GM12878 (cell line): ENCODE measurements at regions of chr1 and their contacts with region 1.

Region 1: DNA sequence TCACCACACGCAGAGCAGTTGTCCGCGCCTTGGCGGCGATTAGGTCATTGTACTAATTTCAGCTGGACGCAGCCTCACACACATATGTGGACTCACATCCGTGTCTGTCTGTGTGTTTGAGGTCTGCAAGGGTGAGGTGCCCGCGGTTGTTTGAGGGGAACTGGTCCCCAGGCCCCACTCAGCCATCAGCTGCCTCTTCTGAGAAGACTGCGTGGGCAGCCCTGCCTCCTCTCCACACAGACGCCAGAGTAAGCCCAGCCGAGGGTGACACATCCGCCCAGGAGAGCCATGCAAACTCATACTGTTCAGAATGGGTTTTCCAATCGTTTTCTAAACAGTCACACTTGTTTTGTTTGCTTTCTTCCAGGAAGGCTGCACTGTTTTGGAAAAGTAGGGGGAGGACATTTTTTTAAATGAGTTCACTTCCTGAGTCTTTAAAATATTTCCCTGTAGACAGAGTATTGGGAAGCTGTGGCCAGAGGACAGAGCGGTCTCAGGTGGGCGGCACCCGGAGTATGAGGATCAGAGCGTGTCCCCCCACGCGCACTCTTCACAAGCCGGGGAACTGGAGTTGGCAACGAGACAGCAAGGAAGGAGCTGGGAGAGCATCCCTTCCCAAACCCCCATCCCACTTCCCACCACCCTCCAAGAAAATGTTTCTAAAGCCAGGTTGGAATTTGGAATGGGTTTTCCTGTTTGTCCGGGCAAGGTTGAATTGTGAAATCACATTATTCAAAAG is 53.3 kb downstream of the TOMM20 start:
- DNase-seq: peak; percentile 98
- ATAC-seq: peak; percentile 77
- H3K4me3 ChIP-seq: peak overlapping the region; percentile 37
- H3K27ac ChIP-seq: peak overlapping the region; percentile 99
- H3K4me1 ChIP-seq: peaks cover 70% of the 10 kb centered on the region
- H3K27me3 ChIP-seq: no peaks in the 10 kb centered on the region
- CTCF ChIP-seq: no peak
- EP300 ChIP-seq: peak; percentile 99 to 100; a peak in 3 of 4 replicates
- POLR2A ChIP-seq: peak; percentile 74
- RAD21 ChIP-seq: no peak

Region 2: DNA sequence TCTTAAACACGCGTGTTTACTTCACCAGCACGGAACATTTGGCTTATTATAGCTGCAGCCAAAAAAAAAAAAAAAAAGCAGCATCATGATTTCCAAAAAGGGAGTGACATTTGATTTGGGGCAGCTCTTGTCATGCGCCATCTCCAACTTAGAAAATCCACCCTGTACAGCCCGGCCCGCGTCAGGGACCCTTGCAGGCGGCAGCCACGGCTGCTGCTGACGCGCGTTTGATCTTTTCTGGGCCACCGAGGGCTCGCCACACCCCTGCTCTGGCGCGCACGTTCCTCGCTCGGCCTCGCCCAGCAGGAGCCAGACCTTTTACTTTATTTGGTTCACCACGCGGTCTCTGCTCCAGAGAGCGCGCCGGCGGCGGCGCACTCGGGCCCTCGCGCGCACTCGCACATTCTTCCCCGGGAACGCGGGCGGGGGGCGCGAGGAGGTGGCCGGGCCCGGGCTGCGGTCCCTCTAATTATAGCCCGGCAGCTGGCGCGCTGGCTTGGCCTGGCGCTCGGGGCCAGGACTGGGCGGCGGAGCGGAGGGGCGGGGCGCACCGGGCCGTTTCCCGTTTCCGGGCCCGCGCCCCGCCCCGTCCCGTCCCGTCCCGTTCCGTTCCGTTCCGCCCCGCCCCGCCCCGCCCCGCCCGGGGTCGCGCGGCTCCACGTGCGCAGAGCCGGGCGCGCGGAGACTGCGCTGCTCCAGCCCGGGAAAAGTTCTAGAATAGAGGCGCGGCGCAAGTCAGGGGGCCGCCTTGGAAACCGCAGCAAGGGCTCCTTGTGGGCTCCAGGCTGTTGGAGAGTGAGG is 475.5 kb before region 1 on chr1:
- CTCF ChIA-PET with region 1: interaction called, 3 read pairs
- POLR2A ChIA-PET with region 1: interaction called, 3 read pairs
- RAD21 ChIA-PET with region 1: interaction called, 13 read pairs
- SMC1A ChIA-PET with region 1: interaction called, 7 read pairs
- in situ Hi-C with region 1: loop called (anchors 5 kb)
- intact Hi-C with region 1: no loop called
- DNase-seq: no peak
- ATAC-seq: peak; percentile 76
- H3K4me3 ChIP-seq: peak overlapping the region; percentile 67; the same call in 1 of the 2 replicates
- H3K27ac ChIP-seq: peak overlapping the region; percentile 75
- H3K4me1 ChIP-seq: peaks cover 22% of the 10 kb centered on the region
- H3K27me3 ChIP-seq: no peaks in the 10 kb centered on the region
- CTCF ChIP-seq: 0 out of 6 replicates have a peak, but pooled peaks of 1 of the 3 experiments have one; percentile 5
- EP300 ChIP-seq: 0 out of 4 replicates have a peak, but pooled peaks of 1 of the 2 experiments have one; percentile 42
- POLR2A ChIP-seq: peak; percentile 70; the same call in 1 of the 2 replicates
- RAD21 ChIP-seq: no peak

Region 3: DNA sequence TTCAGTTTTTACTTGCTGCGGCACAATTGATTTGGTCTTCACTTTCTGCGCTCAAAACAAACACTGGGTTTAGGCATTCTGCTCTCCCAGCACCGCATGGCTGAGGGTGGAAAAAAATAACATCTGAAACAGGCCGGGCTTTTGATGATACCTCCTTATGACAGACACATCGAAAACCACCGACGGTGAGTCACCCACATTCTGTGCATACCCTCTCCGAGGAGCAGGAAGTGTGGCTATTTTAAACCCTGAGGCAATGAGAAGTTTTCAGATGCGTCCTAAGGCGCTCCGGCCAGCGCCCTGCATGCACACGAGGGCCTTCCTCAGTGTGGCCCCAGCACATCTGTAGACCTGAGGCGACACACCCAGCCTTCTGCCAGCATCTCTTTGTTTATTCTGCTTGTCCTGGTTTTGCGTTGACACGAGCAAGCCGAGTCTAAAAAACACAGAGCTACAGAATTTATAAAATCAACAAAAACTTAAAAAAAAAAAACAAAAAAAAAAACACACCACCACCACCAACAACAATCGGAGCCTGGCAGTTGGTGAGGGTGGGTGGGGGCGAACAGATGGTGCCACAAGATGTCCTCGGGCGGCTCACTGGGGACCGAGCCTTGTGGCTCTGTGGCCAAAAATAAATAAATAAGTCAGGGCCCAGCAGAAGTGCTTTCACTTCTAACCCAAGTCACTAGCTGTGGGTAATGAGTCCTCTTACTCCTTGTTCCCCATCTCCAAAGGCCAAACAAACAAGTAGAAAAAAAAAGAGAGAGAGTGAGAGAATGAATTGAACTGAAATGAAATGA is 302.8 kb before region 1 on chr1:
- CTCF ChIA-PET with region 1: no interaction called
- POLR2A ChIA-PET with region 1: no interaction called
- RAD21 ChIA-PET with region 1: interaction called, 4 read pairs
- SMC1A ChIA-PET with region 1: interaction called, 4 read pairs
- in situ Hi-C with region 1: no loop called
- intact Hi-C with region 1: loop called (anchors 2 kb)
- DNase-seq: peak; percentile 97
- ATAC-seq: peak; percentile 92
- H3K4me3 ChIP-seq: peak overlapping the region; percentile 13; the same call in 1 of the 2 replicates
- H3K27ac ChIP-seq: peak overlapping the region; percentile 89
- H3K4me1 ChIP-seq: peaks cover 37% of the 10 kb centered on the region
- H3K27me3 ChIP-seq: peaks cover 6 to 11% of the 10 kb centered on the region in 2 experiments; a peak in 3 of 4 replicates
- CTCF ChIP-seq: no peak
- EP300 ChIP-seq: peak; percentile 88 to 93; a peak in 3 of 4 replicates
- POLR2A ChIP-seq: peak; percentile 77
- RAD21 ChIP-seq: 0 out of 2 replicates have a peak, but pooled peaks have one; percentile 13

Region 4: GRCh38 chr1:234925440-234926263 is 149.7 kb before region 1 on chr1:
- CTCF ChIA-PET with region 1: no interaction called
- POLR2A ChIA-PET with region 1: no interaction called
- RAD21 ChIA-PET with region 1: interaction called, 4 read pairs
- SMC1A ChIA-PET with region 1: interaction called, 3 read pairs
- in situ Hi-C with region 1: no loop called
- intact Hi-C with region 1: loop called (anchors 1 kb)
- DNase-seq: peak; percentile 40
- ATAC-seq: peak; percentile 1
- H3K4me3 ChIP-seq: peak overlapping the region; percentile 40; the same call in 1 of the 2 replicates
- H3K27ac ChIP-seq: peak overlapping the region; percentile 95
- H3K4me1 ChIP-seq: peaks cover 48% of the 10 kb centered on the region
- H3K27me3 ChIP-seq: no peaks in the 10 kb centered on the region
- CTCF ChIP-seq: no peak
- EP300 ChIP-seq: no peak; a peak in 1 of 4 replicates
- POLR2A ChIP-seq: no peak
- RAD21 ChIP-seq: no peak

Region 5: DNA sequence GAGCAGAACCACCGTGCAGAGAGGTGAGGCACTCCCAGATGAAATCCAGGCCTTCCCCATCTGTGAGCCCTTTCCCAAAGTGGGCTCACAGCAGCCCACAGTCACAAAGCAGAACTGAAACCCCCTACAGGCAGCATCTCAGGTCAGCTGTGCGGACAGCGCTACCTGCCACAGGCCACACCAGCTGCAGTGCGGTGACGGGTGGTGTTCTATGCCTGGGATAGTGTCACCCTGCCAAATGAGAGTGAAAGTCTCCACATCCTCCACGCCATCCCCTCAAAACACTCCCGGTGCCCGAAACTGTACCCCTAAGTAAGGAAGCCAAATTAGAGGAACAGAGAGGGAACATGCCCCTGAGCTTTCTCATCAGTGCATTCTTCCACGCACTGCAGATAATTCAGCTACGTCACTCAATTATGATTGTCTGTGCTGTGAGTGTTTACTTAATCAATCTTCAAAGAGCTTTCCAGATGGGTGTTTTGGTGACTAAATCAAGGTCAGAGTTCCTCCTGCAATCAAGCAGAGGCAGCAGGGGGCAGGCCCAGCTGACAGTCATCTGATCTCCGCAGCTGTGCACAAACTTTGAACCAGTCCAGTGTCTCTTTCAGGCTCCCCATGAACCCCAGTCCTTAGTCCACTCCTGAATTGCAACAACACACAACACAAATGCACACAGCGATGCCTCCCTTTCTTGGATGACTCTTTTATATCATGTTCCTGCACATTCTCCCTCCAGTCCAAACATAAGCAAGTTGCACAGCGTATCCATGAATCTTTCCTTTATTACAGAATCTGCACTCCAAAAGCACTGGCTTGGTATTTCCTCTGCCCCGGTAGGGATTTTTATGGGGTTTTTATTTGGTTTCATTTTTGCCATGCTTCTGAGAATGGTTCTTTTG is 96.7 kb before region 1 on chr1:
- CTCF ChIA-PET with region 1: interaction called, 9 read pairs
- POLR2A ChIA-PET with region 1: interaction called, 6 read pairs
- RAD21 ChIA-PET with region 1: interaction called, 85 read pairs
- SMC1A ChIA-PET with region 1: interaction called, 174 read pairs
- in situ Hi-C with region 1: loop called (anchors 5 kb)
- intact Hi-C with region 1: loop called (anchors 1 kb)
- DNase-seq: peak; percentile 94
- ATAC-seq: peak; percentile 66
- H3K4me3 ChIP-seq: peak overlapping the region; percentile 29
- H3K27ac ChIP-seq: peak overlapping the region; percentile 98
- H3K4me1 ChIP-seq: peaks cover 76% of the 10 kb centered on the region
- H3K27me3 ChIP-seq: no peaks in the 10 kb centered on the region
- CTCF ChIP-seq: peak in 2 of 3 experiments; percentile 13 to 16; a peak in 2 of 6 replicates
- EP300 ChIP-seq: peak; percentile 96 to 99
- POLR2A ChIP-seq: 0 out of 2 replicates have a peak, but pooled peaks have one; percentile 56
- RAD21 ChIP-seq: peak; percentile 44

Region 6: GRCh38 chr1:235024711-235025421 is 50.5 kb before region 1 on chr1:
- CTCF ChIA-PET with region 1: interaction called, 3 read pairs
- POLR2A ChIA-PET with region 1: interaction called, 3 read pairs
- RAD21 ChIA-PET with region 1: interaction called, 14 read pairs
- SMC1A ChIA-PET with region 1: interaction called, 47 read pairs
- in situ Hi-C with region 1: loop called (anchors 5 kb)
- intact Hi-C with region 1: loop called (anchors 1 kb)
- DNase-seq: no peak
- ATAC-seq: peak; percentile 23
- H3K4me3 ChIP-seq: no peak overlapping the region
- H3K27ac ChIP-seq: peak overlapping the region; percentile 75
- H3K4me1 ChIP-seq: peaks cover 37% of the 10 kb centered on the region
- H3K27me3 ChIP-seq: no peaks in the 10 kb centered on the region
- CTCF ChIP-seq: no peak
- EP300 ChIP-seq: no peak
- POLR2A ChIP-seq: no peak
- RAD21 ChIP-seq: no peak

Region 7: GRCh38 chr1:235050911-235051360 is 24.4 kb before region 1 on chr1:
- CTCF ChIA-PET with region 1: interaction called, 6 read pairs
- POLR2A ChIA-PET with region 1: interaction called, 7 read pairs
- RAD21 ChIA-PET with region 1: interaction called, 31 read pairs
- SMC1A ChIA-PET with region 1: interaction called, 71 read pairs
- in situ Hi-C with region 1: no loop called
- intact Hi-C with region 1: loop called (anchors 1 kb)
- DNase-seq: no peak
- ATAC-seq: peak; percentile 78
- H3K4me3 ChIP-seq: no peak overlapping the region
- H3K27ac ChIP-seq: no peak overlapping the region
- H3K4me1 ChIP-seq: peaks cover 49% of the 10 kb centered on the region
- H3K27me3 ChIP-seq: no peaks in the 10 kb centered on the region
- CTCF ChIP-seq: no peak
- EP300 ChIP-seq: no peak
- POLR2A ChIP-seq: no peak
- RAD21 ChIP-seq: no peak

Region 8: GRCh38 chr1:235275223-235275622 is 199.9 kb after region 1 on chr1:
- CTCF ChIA-PET with region 1: no interaction called
- POLR2A ChIA-PET with region 1: no interaction called
- RAD21 ChIA-PET with region 1: no interaction called
- SMC1A ChIA-PET with region 1: no interaction called
- in situ Hi-C with region 1: no loop called
- intact Hi-C with region 1: no loop called
- DNase-seq: peak; percentile 55
- ATAC-seq: peak; percentile 88
- H3K4me3 ChIP-seq: no peak overlapping the region
- H3K27ac ChIP-seq: peak overlapping the region; percentile 41
- H3K4me1 ChIP-seq: peaks cover 20% of the 10 kb centered on the region
- H3K27me3 ChIP-seq: no peaks in the 10 kb centered on the region
- CTCF ChIP-seq: no peak
- EP300 ChIP-seq: no peak
- POLR2A ChIP-seq: no peak
- RAD21 ChIP-seq: no peak

Region 9: DNA sequence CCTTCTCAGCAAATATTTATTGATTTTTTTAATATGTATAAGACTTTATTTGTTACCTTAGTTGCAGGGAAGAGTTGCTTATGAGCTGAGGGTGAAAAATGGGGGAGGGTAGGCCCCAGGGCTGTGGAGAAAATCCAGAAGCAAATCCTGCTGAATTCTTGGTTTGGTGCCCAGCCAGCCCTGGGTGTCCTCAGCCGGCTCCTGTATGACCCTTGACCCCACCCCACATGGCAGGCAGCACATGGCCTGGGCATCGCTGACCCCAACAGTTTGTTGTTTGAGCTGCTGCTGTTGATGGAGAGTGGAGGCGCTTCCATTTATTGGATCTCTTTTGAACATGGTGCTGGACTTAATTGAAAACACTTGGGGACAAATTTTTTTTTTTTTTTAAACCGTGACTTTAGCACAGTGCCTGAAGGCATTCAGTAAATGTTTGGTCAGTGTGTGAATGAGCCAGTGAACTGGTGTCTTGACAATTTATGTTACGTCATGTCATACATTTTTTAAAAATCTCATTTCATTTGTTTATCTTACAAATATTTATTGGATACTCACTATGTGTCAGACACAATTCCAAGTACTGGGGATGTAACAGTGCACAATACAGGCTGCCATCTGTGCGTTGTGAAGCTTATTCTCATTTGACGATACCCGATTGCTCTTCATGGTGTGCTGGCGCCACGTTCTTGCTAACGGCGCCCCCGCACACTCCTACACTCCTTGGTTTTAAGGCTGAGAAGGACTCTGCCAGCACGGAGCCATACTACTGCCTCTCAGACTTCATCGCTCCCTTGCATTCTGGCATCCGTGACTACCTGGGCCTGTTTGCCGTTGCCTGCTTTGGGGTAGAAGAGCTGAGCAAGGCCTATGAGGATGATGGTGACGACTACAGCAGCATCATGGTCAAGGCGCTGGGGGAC is 1818.5 kb after region 1 on chr1:
- CTCF ChIA-PET with region 1: no interaction called
- POLR2A ChIA-PET with region 1: no interaction called
- RAD21 ChIA-PET with region 1: no interaction called
- SMC1A ChIA-PET with region 1: no interaction called
- in situ Hi-C with region 1: no loop called
- intact Hi-C with region 1: no loop called
- DNase-seq: no peak
- ATAC-seq: no peak
- H3K4me3 ChIP-seq: no peak overlapping the region
- H3K27ac ChIP-seq: no peak overlapping the region
- H3K4me1 ChIP-seq: no peaks in the 10 kb centered on the region
- H3K27me3 ChIP-seq: no peaks in the 10 kb centered on the region
- CTCF ChIP-seq: no peak
- EP300 ChIP-seq: no peak
- POLR2A ChIP-seq: no peak
- RAD21 ChIP-seq: no peak